Sciatic nerve (tissue), 2 donors: ENCODE measurements at regions of chr11 and their contacts with region 1.

Region 1: GRCh38 chr11:84950569-84951270 is 676.4 kb downstream of the DLG2 start:
- DNase-seq: no peak
- ATAC-seq: no peak

Region 2: GRCh38 chr11:84890676-84891075 is 60.0 kb before region 1 on chr11:
- intact Hi-C with region 1: loop called (anchors 2 kb)
- DNase-seq: no peak
- ATAC-seq: no peak